Esophagus squamous epithelium (tissue), 5 donors: ENCODE measurements at regions of chr14 and their contacts with region 1.

Region 1: DNA sequence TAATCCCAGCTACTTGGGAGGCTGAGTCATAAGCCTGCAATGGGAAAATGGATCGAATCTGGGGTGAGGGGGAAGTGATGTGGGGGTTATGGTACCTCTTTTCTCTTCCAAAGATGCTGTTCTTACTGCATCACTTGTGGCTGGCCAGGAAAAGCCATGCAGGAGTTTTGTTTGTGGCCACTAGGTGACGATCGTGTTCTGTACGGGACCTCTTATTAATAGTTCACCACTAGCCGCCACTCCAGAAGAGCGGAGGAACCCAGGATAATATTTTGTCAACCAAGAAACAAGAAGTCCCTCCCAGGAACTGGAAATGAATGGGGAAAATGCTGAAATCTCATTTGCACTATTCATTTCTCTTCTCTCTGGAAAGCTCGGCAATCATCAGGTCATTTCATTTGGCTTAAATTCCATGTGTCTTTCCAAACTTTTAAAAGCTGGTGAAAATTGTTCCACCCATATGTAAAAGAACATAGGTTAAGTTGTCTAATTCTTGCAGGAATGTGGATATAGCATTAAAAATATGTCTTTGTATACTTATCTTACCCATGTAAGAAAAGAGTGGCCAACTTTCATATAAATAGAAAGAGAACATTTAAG is 8.9 kb downstream of the GPR65 start:
- DNase-seq: no peak
- H3K4me3 ChIP-seq: no peak overlapping the region
- H3K27ac ChIP-seq: no peak overlapping the region
- H3K4me1 ChIP-seq: no peaks in the 10 kb centered on the region
- H3K27me3 ChIP-seq: no peaks in the 10 kb centered on the region
- CTCF ChIP-seq: peak; percentile 61 to 89 (median 82)
- POLR2A ChIP-seq: no peak

Region 2: GRCh38 chr14:87824266-87824665 is 189.6 kb before region 1 on chr14:
- intact Hi-C with region 1: no loop called
- DNase-seq: no peak
- H3K4me3 ChIP-seq: no peak overlapping the region
- H3K27ac ChIP-seq: no peak overlapping the region
- H3K4me1 ChIP-seq: no peaks in the 10 kb centered on the region
- H3K27me3 ChIP-seq: no peaks in the 10 kb centered on the region
- CTCF ChIP-seq: no peak
- POLR2A ChIP-seq: no peak

Region 3: DNA sequence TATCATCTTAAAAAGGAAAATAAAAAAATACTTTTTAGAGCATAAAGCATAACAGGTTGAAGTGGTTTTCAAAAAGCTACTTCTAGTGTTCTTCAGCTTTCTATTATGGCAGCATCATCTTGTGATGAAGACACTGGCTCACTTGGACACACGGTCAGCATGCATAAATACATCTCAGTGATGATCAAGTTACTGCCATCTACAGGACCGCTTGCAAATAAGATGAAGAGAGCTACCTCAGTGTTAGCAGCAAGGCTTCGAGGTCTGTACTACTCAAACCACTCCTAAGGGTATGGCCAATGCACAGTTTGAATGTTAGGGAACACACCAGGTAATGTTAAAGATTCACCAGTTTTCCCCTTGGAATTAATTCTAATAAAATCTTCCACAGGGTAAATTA is 79.7 kb before region 1 on chr14:
- intact Hi-C with region 1: no loop called
- DNase-seq: no peak
- H3K4me3 ChIP-seq: no peak overlapping the region
- H3K27ac ChIP-seq: no peak overlapping the region
- H3K4me1 ChIP-seq: no peaks in the 10 kb centered on the region
- H3K27me3 ChIP-seq: no peaks in the 10 kb centered on the region
- CTCF ChIP-seq: no peak
- POLR2A ChIP-seq: no peak

Region 4: GRCh38 chr14:87960013-87960787 is 53.6 kb before region 1 on chr14:
- intact Hi-C with region 1: no loop called
- DNase-seq: no peak
- H3K4me3 ChIP-seq: no peak overlapping the region
- H3K27ac ChIP-seq: no peak overlapping the region
- H3K4me1 ChIP-seq: no peaks in the 10 kb centered on the region
- H3K27me3 ChIP-seq: no peaks in the 10 kb centered on the region
- CTCF ChIP-seq: no peak
- POLR2A ChIP-seq: no peak

Region 5: DNA sequence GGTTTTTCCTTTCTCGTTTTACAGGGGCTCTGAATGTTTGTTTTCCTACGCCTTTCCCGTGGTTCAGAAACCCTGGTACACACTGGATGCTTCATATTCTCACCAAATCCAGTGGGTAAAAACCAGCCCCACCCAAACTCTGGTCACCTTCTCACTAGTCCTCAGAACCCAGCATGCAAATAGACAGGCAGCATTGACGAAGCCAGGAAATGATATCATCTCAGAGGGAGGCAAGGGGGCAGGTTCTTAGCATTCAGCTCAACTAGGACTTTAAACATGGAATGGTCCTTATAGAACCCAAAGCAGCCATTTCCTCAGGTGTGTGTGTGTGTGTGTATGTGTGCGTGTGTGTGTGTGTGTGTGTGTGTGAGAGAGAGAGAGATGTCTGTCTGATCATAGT is 167.2 kb after region 1 on chr14:
- intact Hi-C with region 1: no loop called
- DNase-seq: no peak
- H3K4me3 ChIP-seq: no peak overlapping the region
- H3K27ac ChIP-seq: no peak overlapping the region
- H3K4me1 ChIP-seq: no peaks in the 10 kb centered on the region
- H3K27me3 ChIP-seq: no peaks in the 10 kb centered on the region
- CTCF ChIP-seq: no peak
- POLR2A ChIP-seq: no peak

Region 6: DNA sequence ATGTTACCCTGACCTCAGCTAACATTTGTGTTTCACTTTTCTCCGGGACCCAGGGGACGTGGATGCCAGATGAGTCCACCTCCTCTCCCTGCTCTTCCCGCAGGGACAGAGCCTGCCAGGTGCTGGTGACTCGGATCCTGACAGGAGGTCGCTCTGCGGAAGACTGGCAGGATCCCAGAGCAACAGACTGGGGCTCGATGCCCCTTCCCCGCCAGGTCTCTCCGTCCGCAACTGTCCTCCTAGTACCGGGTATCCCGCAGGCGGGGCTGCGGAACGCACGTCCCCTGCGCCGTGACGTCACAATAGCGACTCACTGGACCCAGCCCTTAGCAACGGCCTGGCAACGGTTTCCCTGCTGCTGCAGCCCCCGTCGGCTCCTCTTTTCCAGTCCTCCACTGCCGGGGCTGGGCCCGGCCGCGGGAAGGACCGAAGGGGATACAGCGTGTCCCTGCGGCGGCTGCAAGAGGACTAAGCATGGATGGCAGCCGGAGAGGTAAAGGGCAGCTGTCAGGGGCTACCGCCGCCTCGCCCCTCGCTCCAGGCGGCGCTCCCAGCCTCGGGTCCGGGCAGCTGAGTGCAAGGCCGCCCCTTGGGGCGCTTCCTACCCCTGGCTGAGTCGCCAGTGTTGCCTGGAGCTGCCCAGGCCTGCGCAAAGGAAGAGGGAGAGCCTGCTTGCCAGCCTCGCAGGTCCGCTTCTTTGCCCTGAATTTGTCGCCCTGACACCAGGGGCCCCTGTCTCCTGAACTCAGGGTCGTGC is 371.7 kb after region 1 on chr14 and contains the start of gene SPATA7:
- intact Hi-C with region 1: loop called (anchors 10 kb)
- DNase-seq: peak; percentile 26
- H3K4me3 ChIP-seq: peak within 1 kb of the TSS; percentile 69 to 89 (median 74)
- H3K27ac ChIP-seq: peak within 1 kb of the TSS; percentile 77 to 86 (median 84)
- H3K4me1 ChIP-seq: peaks cover 0 to 22% (median 7%) of the 10 kb centered on the region in 3 donors
- H3K27me3 ChIP-seq: no peaks in the 10 kb centered on the region
- CTCF ChIP-seq: peak in 1 of 6 experiments; percentile 17
- POLR2A ChIP-seq: peak in 3 of 4 donors; percentile 61 to 78 (median 63)
- total RNA-seq, gene SPATA7: 2.2 to 15.2 (median 7.2) TPM